Caco-2 (cell line): ENCODE measurements at regions of chr2 and their contacts with region 1.

Region 1: DNA sequence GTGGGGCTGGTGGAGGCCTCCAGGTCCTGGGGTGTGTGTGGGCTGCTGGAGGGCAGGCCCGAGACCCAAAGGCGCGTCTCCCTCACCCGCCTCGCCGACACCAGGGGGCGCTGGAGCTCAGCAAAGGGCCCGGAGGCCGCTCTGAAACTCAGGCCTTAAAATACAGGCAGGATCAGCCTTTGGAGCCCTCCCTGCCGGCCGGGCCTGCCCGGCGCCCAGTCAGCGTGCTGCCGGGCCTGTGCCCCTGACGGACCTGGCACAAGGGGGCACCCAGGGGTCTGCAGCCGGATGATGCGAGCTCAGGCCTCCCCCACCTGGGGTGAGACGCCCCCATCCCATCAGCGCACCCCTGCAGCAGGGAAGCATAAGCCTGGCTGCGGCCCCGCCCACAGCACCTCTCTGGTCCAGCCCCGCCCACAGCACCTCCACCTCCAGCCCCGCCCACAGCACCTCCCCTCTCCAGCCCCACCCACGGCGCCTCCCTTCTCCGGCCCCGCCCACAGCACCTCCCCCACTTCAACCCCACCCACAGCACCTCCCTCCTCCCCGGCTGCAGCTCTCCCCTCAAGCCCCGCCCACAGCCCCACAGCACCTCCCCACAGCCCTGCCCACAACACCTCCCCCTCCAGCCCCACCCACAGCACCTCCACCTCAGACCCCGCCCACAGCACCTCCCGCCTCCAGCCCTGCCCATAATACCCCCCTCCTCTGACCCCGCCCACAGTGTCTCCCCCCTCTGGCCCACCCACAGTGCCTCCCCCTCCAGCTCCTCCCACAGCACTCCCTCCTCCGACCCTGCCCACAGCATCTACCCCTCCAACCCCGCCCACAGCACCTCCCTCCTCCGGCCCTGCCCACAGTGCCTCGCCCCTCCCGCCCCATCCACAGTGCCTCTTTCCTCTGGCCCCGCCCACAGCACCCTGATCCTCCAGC is 92.8 kb upstream of the OTOS start:
- DNase-seq: peak; percentile 78 to 91
- H3K4me3 ChIP-seq: peak overlapping the region; percentile 38
- H3K4me3 Mint-ChIP-seq: peak overlapping the region; percentile 57
- H3K27ac Mint-ChIP-seq: no peak overlapping the region
- H3K4me1 ChIP-seq: no peaks in the 10 kb centered on the region
- H3K4me1 Mint-ChIP-seq: peaks cover 6% of the 10 kb centered on the region
- H3K27me3 ChIP-seq: no peaks in the 10 kb centered on the region
- H3K27me3 Mint-ChIP-seq: no peaks in the 10 kb centered on the region
- CTCF ChIP-seq: peak; percentile 60 to 66

Region 2: DNA sequence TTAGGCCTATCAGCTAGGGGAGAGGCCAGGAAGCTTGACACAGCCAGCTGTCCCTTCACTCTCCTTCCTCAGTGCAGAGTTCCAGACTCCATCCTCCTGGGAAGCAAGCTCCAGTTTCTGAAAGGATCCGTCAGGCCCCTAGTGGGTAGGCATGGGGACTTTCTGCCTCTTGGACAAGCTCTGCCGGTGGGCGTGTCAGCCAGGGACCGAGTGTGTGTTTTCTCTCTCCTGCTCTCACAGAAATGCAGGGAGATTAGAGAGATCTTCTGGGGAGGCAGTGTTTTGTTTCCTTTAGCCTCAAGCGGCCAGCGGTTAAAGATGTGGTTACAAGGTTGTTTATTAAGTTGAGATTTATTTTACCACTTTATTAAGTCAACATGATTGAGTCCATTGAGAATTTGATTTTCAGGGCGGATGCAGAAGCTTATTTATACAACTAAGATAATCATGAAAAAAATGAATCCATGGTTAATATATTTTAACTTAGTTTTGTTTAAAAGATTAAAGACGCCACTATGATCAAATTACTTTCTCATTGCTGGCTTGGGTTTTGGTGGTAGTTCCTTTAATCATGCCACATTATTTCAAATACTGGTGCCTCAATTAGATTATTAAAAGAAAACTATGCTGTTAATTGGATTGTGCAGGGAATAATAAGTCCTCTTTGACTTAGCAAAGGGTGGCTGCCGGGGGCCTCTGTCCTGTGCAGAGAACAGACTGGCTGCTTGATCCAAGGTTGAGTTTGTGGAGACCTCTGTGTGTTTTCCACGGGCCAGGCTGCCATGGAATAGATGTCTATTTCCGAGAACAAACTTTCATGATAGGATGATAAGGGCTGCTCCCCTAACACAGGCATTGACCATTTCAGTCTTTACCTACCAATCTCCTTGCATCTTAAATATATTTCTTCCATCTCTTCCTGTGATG is 62.6 kb before region 1 on chr2:
- CTCF ChIA-PET with region 1: no interaction called
- POLR2A ChIA-PET with region 1: no interaction called
- intact Hi-C with region 1: no loop called
- DNase-seq: no peak
- H3K4me3 ChIP-seq: no peak overlapping the region
- H3K4me3 Mint-ChIP-seq: no peak overlapping the region
- H3K27ac Mint-ChIP-seq: no peak overlapping the region
- H3K4me1 ChIP-seq: no peaks in the 10 kb centered on the region
- H3K4me1 Mint-ChIP-seq: no peaks in the 10 kb centered on the region
- H3K27me3 ChIP-seq: no peaks in the 10 kb centered on the region
- H3K27me3 Mint-ChIP-seq: peaks cover 17% of the 10 kb centered on the region
- CTCF ChIP-seq: no peak

Region 3: DNA sequence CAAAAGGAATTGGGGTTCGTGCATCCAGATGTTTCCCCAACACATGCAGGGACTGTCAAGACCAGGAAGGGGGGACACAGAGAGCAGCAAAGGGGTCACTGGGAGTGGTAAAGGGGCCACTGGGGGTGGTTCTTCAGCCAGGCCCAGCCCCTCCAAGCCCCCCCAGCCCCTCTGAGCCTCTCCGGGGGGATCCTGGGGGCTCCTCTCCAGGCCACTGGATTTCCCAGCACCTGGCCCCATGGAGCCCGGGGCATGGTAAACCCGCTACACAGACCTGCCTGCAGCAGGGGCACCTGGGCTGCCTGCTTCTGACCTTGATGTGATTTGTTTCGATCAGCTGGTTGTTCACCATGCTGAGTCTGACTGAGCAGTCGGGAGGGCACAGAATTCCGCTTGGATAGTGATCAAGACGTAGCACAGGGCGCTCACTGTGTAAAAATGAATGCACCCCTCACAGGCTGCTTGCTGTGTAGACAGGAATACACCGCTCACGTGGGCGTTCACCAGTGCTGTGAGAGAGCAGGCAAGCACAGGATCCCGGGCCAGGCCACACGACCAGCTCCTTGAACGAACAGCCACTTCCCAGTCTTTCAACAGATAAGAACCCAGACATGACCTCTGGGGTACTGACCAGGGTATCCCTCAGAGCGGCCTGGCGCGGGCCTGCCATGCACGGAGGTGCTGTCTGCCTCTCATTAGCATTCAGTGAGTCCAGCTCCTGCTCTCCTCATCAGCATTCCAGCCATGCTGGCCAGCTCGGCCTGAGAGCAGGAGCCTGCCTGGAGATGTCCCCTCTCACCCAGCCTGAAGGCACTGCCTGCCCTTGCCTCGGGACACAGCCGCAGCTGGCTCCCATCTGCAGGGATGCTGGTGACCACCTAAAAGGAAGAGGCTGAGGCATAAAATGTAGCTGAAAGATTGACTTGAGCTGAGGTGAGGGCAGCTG is 19.5 kb before region 1 on chr2:
- CTCF ChIA-PET with region 1: interaction called, 10 read pairs
- POLR2A ChIA-PET with region 1: no interaction called
- intact Hi-C with region 1: no loop called
- DNase-seq: no peak
- H3K4me3 ChIP-seq: no peak overlapping the region
- H3K4me3 Mint-ChIP-seq: no peak overlapping the region
- H3K27ac Mint-ChIP-seq: no peak overlapping the region
- H3K4me1 ChIP-seq: no peaks in the 10 kb centered on the region
- H3K4me1 Mint-ChIP-seq: no peaks in the 10 kb centered on the region
- H3K27me3 ChIP-seq: no peaks in the 10 kb centered on the region
- H3K27me3 Mint-ChIP-seq: no peaks in the 10 kb centered on the region
- CTCF ChIP-seq: no peak

Region 4: GRCh38 chr2:240255811-240256703 is 22.8 kb after region 1 on chr2:
- CTCF ChIA-PET with region 1: no interaction called
- POLR2A ChIA-PET with region 1: no interaction called
- intact Hi-C with region 1: loop called (anchors 1 kb)
- DNase-seq: peak; percentile 88 to 91
- H3K4me3 ChIP-seq: peak overlapping the region; percentile 41
- H3K4me3 Mint-ChIP-seq: peak overlapping the region; percentile 94
- H3K27ac Mint-ChIP-seq: peak overlapping the region; percentile 99
- H3K4me1 ChIP-seq: peaks cover 48% of the 10 kb centered on the region
- H3K4me1 Mint-ChIP-seq: peaks cover 7% of the 10 kb centered on the region
- H3K27me3 ChIP-seq: no peaks in the 10 kb centered on the region
- H3K27me3 Mint-ChIP-seq: no peaks in the 10 kb centered on the region
- CTCF ChIP-seq: no peak

Region 5: DNA sequence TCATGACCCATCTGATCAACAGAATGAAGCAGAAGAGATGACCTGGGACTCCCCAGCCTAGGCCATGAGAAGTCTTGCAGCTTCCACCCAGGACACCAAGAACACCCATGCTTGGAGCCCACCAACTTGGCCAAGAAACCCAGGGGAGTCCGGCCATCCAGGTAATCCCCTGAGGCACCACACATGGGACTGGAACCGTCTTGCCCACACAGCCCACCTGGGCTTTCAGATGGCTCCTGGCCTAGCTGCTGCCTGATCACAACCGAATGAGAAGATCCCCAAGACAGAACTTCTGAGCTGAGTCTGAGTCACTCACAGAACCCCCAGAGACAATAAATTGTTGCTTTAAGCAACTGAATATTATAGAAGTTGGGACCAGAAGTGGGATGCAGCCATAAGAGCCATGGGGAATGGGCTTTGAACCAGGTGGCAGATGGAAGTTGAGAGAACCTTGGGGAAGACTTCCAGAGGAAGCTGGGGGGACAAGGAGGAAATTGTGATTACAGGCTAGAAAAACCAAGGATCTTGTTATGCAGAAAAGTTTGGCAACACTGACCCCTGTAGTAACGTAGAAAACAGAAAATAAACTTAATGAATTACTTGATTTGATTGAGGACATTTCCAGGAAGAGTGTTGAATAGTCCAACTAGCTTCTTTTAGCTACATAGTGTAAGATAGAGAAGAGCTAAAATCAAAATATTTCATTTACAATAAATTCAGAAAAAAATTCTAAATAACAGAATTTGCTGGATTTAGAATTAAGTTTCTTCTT is 110.1 kb after region 1 on chr2:
- CTCF ChIA-PET with region 1: no interaction called
- POLR2A ChIA-PET with region 1: no interaction called
- intact Hi-C with region 1: loop called (anchors 2 kb)
- DNase-seq: no peak
- H3K4me3 ChIP-seq: no peak overlapping the region
- H3K4me3 Mint-ChIP-seq: no peak overlapping the region
- H3K27ac Mint-ChIP-seq: no peak overlapping the region
- H3K4me1 ChIP-seq: no peaks in the 10 kb centered on the region
- H3K4me1 Mint-ChIP-seq: no peaks in the 10 kb centered on the region
- H3K27me3 ChIP-seq: no peaks in the 10 kb centered on the region
- H3K27me3 Mint-ChIP-seq: no peaks in the 10 kb centered on the region
- CTCF ChIP-seq: no peak

Region 6: DNA sequence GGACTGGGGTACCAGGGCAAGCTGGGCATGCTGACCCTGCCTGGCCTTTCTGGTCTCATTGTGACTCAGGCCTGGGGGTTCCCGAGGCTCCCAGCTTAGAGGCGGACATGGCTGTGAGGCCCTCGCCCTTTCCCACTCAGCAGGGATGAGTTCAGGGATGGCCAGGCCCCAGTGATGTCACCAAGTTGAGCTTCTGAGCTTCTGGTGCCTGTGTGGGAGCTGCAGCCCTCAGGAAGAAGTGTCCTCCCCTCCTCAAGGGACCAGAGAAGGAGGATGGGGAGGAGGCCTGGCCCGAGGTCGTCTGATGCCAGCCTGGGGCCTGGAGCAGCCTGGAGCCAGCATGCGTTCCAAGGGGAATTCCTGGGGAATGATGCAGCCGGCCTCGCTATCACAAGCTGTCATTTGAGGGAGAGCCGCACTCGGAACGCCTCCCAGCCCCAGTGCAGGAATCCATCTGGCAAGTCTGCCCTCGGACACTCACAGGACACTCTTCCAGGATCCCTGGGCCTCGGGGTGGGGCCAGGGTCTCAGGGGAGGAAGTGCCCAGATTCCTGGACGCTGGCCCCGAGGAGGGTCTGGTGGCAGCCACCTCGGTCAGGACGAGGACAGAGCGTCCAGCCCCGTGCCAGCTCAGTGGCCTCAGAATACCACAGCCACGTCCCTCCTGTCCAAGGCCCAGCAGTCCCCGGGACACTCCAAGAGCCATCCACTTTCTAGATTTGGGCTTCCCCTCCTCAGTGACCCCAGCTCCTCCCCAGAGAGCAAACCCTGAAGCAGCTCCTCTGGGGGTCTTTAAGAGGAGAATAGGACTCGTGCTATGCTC is 141.1 kb after region 1 on chr2:
- CTCF ChIA-PET with region 1: no interaction called
- POLR2A ChIA-PET with region 1: no interaction called
- intact Hi-C with region 1: no loop called
- DNase-seq: peak; percentile 8 to 61
- H3K4me3 ChIP-seq: no peak overlapping the region
- H3K4me3 Mint-ChIP-seq: no peak overlapping the region
- H3K27ac Mint-ChIP-seq: no peak overlapping the region
- H3K4me1 ChIP-seq: peaks cover 25% of the 10 kb centered on the region
- H3K4me1 Mint-ChIP-seq: no peaks in the 10 kb centered on the region
- H3K27me3 ChIP-seq: no peaks in the 10 kb centered on the region
- H3K27me3 Mint-ChIP-seq: no peaks in the 10 kb centered on the region
- CTCF ChIP-seq: no peak

Region 7: GRCh38 chr2:240434728-240435456 is 201.7 kb after region 1 on chr2:
- CTCF ChIA-PET with region 1: no interaction called
- POLR2A ChIA-PET with region 1: no interaction called
- intact Hi-C with region 1: loop called (anchors 1 kb)
- DNase-seq: peak; percentile 87 to 90
- H3K4me3 ChIP-seq: peak overlapping the region; percentile 64
- H3K4me3 Mint-ChIP-seq: peak overlapping the region; percentile 73
- H3K27ac Mint-ChIP-seq: no peak overlapping the region
- H3K4me1 ChIP-seq: peaks cover 9% of the 10 kb centered on the region; the same call in 1 of the 2 replicates
- H3K4me1 Mint-ChIP-seq: no peaks in the 10 kb centered on the region
- H3K27me3 ChIP-seq: no peaks in the 10 kb centered on the region
- H3K27me3 Mint-ChIP-seq: no peaks in the 10 kb centered on the region
- CTCF ChIP-seq: no peak